B cell (primary cell): ENCODE measurements at regions of chr14 and their contacts with region 1.

Region 1: GRCh38 chr14:22852940-22853767 is 16.8 kb downstream of the MMP14 start:
- DNase-seq: peak; percentile 91
- ATAC-seq: peak; percentile 95
- H3K4me3 ChIP-seq: peak overlapping the region; percentile 49 to 72 (median 63)
- H3K4me3 Mint-ChIP-seq: peak overlapping the region; percentile 88
- H3K27ac ChIP-seq: peak overlapping the region in 1 of 2 donors; percentile 42
- H3K27ac Mint-ChIP-seq: peak overlapping the region; percentile 85
- H3K4me1 ChIP-seq: peaks cover 0 to 8% of the 10 kb centered on the region in 2 donors
- H3K4me1 Mint-ChIP-seq: peaks cover 6% of the 10 kb centered on the region
- H3K27me3 ChIP-seq: peaks cover 0 to 5% (median 0%) of the 10 kb centered on the region in 4 experiments
- H3K27me3 Mint-ChIP-seq: peaks cover 6% of the 10 kb centered on the region
- CTCF ChIP-seq: peak; percentile 87

Region 2: GRCh38 chr14:22314181-22314820 is 538.9 kb before region 1 on chr14:
- CTCF ChIA-PET with region 1: interaction called, 3 read pairs
- POLR2A ChIA-PET with region 1: no interaction called
- intact Hi-C with region 1: loop called (anchors 10 kb)
- DNase-seq: peak; percentile 78
- ATAC-seq: peak; percentile 93
- H3K4me3 ChIP-seq: no peak overlapping the region
- H3K4me3 Mint-ChIP-seq: no peak overlapping the region
- H3K27ac ChIP-seq: no peak overlapping the region
- H3K27ac Mint-ChIP-seq: no peak overlapping the region
- H3K4me1 ChIP-seq: no peaks in the 10 kb centered on the region
- H3K4me1 Mint-ChIP-seq: peaks cover 5% of the 10 kb centered on the region
- H3K27me3 ChIP-seq: no peaks in the 10 kb centered on the region
- H3K27me3 Mint-ChIP-seq: no peaks in the 10 kb centered on the region
- CTCF ChIP-seq: peak; percentile 88

Region 3: GRCh38 chr14:22589096-22589839 is 263.9 kb before region 1 on chr14 and contains the start of gene DAD1:
- CTCF ChIA-PET with region 1: interaction called, 25 read pairs
- POLR2A ChIA-PET with region 1: no interaction called
- intact Hi-C with region 1: no loop called
- DNase-seq: peak; percentile 100
- ATAC-seq: peak; percentile 89
- H3K4me3 ChIP-seq: peak within 1 kb of the TSS; percentile 75 to 84 (median 78)
- H3K4me3 Mint-ChIP-seq: peak within 1 kb of the TSS; percentile 99
- H3K27ac ChIP-seq: peak within 1 kb of the TSS; percentile 97
- H3K27ac Mint-ChIP-seq: peak within 1 kb of the TSS; percentile 96
- H3K4me1 ChIP-seq: peaks cover 30% of the 10 kb centered on the region in 2 donors
- H3K4me1 Mint-ChIP-seq: peaks cover 53% of the 10 kb centered on the region
- H3K27me3 ChIP-seq: no peaks in the 10 kb centered on the region
- H3K27me3 Mint-ChIP-seq: peaks cover 2% of the 10 kb centered on the region
- CTCF ChIP-seq: no peak
- total RNA-seq, gene DAD1: 76.1 and 77.4 TPM in 2 replicates

Region 4: DNA sequence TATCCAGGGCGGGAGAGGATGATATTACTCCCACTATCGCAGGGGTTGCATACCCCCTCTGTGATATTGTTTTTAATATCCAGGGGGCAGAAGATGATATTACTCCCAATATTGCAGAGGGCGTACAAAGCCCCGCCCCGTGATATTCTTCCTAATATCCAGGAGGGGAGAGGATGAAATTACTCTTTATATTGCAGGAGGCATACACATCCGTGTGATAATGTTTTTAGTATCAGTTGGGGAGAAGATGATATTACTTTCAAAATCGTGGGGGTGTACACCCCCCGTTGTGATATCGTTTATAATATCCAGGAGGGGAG is 139.6 kb before region 1 on chr14:
- CTCF ChIA-PET with region 1: interaction called, 3 read pairs
- POLR2A ChIA-PET with region 1: no interaction called
- intact Hi-C with region 1: loop called (anchors 2 kb)
- DNase-seq: no peak
- ATAC-seq: no peak
- H3K4me3 ChIP-seq: peak overlapping the region in 4 of 5 experiments; percentile 23 to 53 (median 45)
- H3K4me3 Mint-ChIP-seq: peak overlapping the region; percentile 90
- H3K27ac ChIP-seq: no peak overlapping the region
- H3K27ac Mint-ChIP-seq: no peak overlapping the region
- H3K4me1 ChIP-seq: peaks cover 5 to 6% of the 10 kb centered on the region in 2 donors
- H3K4me1 Mint-ChIP-seq: peaks cover 11% of the 10 kb centered on the region
- H3K27me3 ChIP-seq: peaks cover 0 to 21% (median 14%) of the 10 kb centered on the region in 4 experiments
- H3K27me3 Mint-ChIP-seq: peaks cover 33% of the 10 kb centered on the region
- CTCF ChIP-seq: no peak

Region 5: GRCh38 chr14:22781586-22781991 is 71.6 kb before region 1 on chr14:
- CTCF ChIA-PET with region 1: interaction called, 73 read pairs
- POLR2A ChIA-PET with region 1: no interaction called
- intact Hi-C with region 1: loop called (anchors 1 kb)
- DNase-seq: no peak
- ATAC-seq: no peak
- H3K4me3 ChIP-seq: no peak overlapping the region
- H3K4me3 Mint-ChIP-seq: no peak overlapping the region
- H3K27ac ChIP-seq: no peak overlapping the region
- H3K27ac Mint-ChIP-seq: peak overlapping the region; percentile 71
- H3K4me1 ChIP-seq: peaks cover 0 to 5% of the 10 kb centered on the region in 2 donors
- H3K4me1 Mint-ChIP-seq: peaks cover 6% of the 10 kb centered on the region
- H3K27me3 ChIP-seq: no peaks in the 10 kb centered on the region
- H3K27me3 Mint-ChIP-seq: no peaks in the 10 kb centered on the region
- CTCF ChIP-seq: no peak

Region 6: DNA sequence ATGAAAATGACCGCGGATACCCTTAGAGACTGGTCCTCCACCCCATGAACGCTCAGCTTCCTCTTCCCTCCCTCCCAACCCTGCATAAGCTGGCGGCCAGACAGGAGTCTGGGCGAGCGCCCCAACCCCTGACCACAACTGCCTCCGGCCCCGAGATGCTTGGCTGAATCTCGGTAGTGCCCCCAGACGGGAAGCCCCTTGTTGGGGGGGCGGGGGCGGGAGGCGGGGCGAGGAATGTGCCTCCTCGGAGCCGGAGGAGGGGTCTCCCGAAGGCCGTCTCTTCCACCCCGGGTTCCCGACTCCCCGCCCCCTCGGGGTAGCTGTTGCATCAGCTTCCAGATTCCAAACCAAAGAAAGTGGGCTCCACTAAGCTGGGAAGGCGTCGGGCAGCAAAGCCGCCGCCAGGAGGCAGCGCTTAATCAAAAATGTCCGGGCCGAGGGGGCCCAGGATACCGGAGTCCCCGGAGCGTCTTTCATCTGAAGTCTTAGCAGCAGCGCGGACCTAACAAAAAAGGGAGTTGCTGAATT is 30.5 kb before region 1 on chr14:
- CTCF ChIA-PET with region 1: interaction called, 207 read pairs
- POLR2A ChIA-PET with region 1: interaction called, 5 read pairs
- intact Hi-C with region 1: loop called (anchors 1 kb)
- DNase-seq: peak; percentile 87
- ATAC-seq: peak; percentile 67
- H3K4me3 ChIP-seq: peak overlapping the region; percentile 49 to 85 (median 56)
- H3K4me3 Mint-ChIP-seq: peak overlapping the region; percentile 88
- H3K27ac ChIP-seq: peak overlapping the region; percentile 65 to 71
- H3K27ac Mint-ChIP-seq: peak overlapping the region; percentile 94
- H3K4me1 ChIP-seq: peaks cover 31 to 47% of the 10 kb centered on the region in 2 donors
- H3K4me1 Mint-ChIP-seq: peaks cover 61% of the 10 kb centered on the region
- H3K27me3 ChIP-seq: no peaks in the 10 kb centered on the region
- H3K27me3 Mint-ChIP-seq: no peaks in the 10 kb centered on the region
- CTCF ChIP-seq: peak; percentile 82

Region 7: DNA sequence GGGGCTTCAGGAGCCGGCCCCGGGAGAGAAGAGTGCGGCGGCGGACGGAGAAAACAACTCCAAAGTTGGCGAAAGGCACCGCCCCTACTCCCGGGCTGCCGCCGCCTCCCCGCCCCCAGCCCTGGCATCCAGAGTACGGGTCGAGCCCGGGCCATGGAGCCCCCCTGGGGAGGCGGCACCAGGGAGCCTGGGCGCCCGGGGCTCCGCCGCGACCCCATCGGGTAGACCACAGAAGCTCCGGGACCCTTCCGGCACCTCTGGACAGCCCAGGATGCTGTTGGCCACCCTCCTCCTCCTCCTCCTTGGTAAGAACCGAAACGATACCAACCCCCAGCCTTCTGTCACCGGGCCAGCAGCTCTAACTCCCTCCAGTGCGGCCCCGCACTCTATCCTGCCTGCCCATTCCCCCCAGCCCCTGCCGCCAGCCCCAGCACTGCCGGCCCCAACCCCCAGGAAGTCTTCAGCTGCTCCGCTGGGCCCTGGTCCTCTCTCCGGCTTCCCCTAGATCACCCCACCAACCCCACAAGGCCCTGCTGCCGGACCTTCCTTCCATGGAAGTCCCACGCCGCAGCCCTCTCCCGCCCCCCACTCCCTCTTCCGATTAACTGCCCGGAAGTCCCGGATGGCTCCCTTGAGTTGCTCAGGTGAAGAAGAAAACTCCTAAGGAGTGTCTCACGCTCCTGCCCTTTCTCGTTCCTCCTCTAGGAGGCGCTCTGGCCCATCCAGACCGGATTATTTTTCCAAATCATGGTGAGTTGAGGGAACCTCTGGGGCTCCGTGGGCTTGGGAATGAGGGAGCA is 19.1 kb after region 1 on chr14:
- CTCF ChIA-PET with region 1: interaction called, 36 read pairs
- POLR2A ChIA-PET with region 1: interaction called, 3 read pairs
- intact Hi-C with region 1: loop called (anchors 1 kb)
- DNase-seq: peak; percentile 83
- ATAC-seq: peak; percentile 22
- H3K4me3 ChIP-seq: peak overlapping the region; percentile 79 to 97 (median 92)
- H3K4me3 Mint-ChIP-seq: peak overlapping the region; percentile 96
- H3K27ac ChIP-seq: peak overlapping the region; percentile 84 to 88
- H3K27ac Mint-ChIP-seq: peak overlapping the region; percentile 98
- H3K4me1 ChIP-seq: peaks cover 19 to 35% of the 10 kb centered on the region in 2 donors
- H3K4me1 Mint-ChIP-seq: peaks cover 34% of the 10 kb centered on the region
- H3K27me3 ChIP-seq: no peaks in the 10 kb centered on the region
- H3K27me3 Mint-ChIP-seq: no peaks in the 10 kb centered on the region
- CTCF ChIP-seq: peak; percentile 90